ENCODE measurements at regions of chr7 and their contacts with region 1.

Region 1: DNA sequence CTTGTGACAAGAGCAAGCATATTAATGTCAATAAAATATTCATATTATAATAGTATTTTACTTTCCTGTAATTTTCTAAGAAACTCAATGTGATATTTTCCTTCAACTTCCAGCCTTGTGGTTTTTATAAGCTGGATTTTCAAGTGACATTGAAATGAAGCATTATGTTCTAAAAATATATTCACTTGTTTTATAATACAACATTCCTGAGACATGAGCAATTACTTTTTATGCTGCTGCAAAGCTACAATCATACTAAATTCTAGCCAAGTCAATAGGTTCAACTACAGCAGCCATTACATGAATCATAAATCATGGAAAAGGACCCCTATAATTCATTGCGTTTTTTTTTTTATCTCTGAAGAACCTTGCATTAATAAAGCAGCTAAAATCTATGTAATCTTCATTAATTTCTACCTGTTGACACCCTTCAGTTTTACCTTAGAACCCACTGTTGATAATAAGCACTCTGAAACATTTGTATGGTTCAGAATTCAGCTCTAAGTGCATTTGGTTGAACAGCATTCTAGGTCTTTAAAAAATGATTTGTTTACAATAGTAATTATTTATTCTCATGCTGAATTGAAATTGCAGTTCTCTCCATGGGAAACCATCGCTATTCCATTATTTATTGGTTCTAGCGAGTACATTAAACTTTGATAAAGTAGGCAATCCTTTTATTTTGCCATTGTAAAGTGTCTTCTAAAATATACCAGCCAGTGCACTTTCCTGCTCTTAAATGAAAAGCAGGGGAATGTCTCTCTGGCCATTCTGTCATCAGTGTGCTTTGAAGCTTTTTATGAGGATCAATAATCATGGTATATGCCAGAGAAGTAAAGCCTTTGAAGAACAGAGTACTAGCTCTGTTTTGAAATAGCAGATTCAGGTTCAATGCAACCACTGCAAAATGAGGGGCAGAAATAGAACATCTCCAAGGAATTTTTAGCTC is 132.6 kb downstream of the GNAT3 start:
- DNase-seq: no peak
- H3K4me3 ChIP-seq: no peak overlapping the region
- H3K27ac ChIP-seq: no peak overlapping the region
- H3K4me1 ChIP-seq: no peaks in the 10 kb centered on the region
- H3K27me3 ChIP-seq: no peaks in the 10 kb centered on the region
- CTCF ChIP-seq: no peak
- POLR2A ChIP-seq: no peak

Region 2: DNA sequence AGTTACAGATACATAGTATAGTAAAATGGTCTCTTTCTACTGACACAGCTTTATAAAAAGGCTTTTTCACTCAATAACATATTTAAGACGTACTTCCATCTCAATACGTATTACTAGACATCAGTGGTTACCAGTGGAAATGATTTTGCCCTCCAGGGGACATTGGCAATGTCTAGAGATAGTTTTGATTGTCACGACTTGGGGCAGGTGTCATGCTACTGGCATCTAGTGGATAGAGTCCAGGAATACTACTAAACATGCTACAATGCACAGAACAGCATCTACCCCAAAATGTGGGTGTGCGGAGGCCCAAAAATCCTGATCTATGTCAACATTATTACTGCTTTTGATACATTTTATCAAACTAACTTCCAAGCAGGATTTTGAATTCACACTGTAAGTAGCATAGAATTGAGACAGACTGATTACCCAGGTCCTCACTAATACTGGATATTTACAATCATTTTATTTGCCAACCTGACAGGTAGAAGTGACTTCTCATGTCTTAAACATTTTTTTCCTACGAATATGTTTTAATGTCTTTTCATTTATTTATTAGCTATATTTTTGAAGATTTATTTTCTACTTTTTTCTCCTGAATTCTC is 1336.8 kb after region 1 on chr7:
- intact Hi-C with region 1: loop called (anchors 5 kb)
- DNase-seq: no peak
- H3K4me3 ChIP-seq: no peak overlapping the region
- H3K27ac ChIP-seq: no peak overlapping the region
- H3K4me1 ChIP-seq: no peaks in the 10 kb centered on the region
- H3K27me3 ChIP-seq: no peaks in the 10 kb centered on the region
- CTCF ChIP-seq: no peak
- POLR2A ChIP-seq: no peak

Measured in breast epithelium (tissue), 4 donors.